WTC11 (cell line): ENCODE measurements at regions of chr5 and their contacts with region 1.

Region 1: DNA sequence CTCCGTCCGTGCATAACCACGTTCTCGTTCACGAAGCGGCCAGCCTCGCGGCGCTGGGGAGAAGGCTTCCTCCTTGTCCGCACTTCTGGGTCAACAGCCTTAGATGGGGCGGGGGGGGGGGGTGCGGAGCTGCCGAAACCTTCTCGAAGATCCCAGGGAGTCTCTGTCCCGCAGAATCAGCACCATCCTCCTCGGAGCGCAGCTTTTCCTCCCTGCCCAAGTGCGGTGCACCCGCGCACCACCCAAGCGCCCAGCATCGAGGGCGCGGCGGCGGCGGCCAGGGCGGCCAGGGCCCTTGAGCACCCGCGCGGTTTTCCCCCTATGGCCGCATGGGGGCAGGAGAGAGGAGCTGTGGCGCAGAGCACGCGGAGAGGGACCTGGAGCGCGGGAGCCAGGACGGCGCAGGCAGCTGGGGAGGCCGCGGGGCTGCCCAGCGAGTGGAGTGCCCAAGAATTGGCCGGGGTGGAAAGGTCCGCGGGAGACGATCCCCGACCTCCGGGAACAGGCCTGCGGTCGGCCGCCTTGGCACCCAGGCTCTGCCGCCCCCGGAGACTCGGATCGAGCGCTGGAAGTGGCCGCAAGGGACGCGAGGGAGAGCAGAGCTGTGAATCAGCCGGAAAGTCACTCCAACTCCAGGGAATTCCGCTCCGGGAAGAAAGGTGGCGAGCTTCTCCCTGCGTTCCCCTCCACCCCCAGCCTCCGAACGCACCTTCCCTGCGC is 43.1 kb downstream of the TMEM174 start:
- DNase-seq: peak; percentile 84
- ATAC-seq: peak; percentile 90
- H3K4me3 Mint-ChIP-seq: peak overlapping the region; percentile 64
- H3K27ac Mint-ChIP-seq: no peak overlapping the region
- H3K4me1 Mint-ChIP-seq: peaks cover 23% of the 10 kb centered on the region
- H3K27me3 Mint-ChIP-seq: peaks cover 68% of the 10 kb centered on the region
- CTCF ChIP-seq: peak; percentile 71; the same call in 1 of the 2 replicates

Region 2: DNA sequence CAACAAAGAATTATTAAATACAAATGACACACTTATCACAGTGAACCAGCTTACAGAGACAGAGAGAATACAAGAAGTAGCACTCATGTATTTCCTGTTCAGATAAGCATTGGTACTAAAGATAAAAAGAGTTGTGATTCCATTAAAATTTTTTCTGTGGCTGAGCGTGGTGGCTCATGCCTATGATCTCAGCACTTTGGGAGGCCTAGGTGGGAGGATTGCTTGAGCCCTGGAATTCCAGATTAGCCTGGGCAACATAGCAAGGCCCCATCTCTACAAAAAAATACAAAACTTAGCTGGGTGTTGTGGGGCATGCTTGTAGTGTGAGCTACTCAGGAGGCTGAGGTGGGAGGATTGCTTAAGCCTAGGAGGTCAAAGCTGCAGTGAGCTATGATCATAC is 227.3 kb before region 1 on chr5:
- CTCF ChIA-PET with region 1: no interaction called
- POLR2A ChIA-PET with region 1: no interaction called
- DNase-seq: no peak
- ATAC-seq: no peak
- H3K4me3 Mint-ChIP-seq: no peak overlapping the region
- H3K27ac Mint-ChIP-seq: no peak overlapping the region
- H3K4me1 Mint-ChIP-seq: no peaks in the 10 kb centered on the region
- H3K27me3 Mint-ChIP-seq: no peaks in the 10 kb centered on the region
- CTCF ChIP-seq: no peak

Region 3: DNA sequence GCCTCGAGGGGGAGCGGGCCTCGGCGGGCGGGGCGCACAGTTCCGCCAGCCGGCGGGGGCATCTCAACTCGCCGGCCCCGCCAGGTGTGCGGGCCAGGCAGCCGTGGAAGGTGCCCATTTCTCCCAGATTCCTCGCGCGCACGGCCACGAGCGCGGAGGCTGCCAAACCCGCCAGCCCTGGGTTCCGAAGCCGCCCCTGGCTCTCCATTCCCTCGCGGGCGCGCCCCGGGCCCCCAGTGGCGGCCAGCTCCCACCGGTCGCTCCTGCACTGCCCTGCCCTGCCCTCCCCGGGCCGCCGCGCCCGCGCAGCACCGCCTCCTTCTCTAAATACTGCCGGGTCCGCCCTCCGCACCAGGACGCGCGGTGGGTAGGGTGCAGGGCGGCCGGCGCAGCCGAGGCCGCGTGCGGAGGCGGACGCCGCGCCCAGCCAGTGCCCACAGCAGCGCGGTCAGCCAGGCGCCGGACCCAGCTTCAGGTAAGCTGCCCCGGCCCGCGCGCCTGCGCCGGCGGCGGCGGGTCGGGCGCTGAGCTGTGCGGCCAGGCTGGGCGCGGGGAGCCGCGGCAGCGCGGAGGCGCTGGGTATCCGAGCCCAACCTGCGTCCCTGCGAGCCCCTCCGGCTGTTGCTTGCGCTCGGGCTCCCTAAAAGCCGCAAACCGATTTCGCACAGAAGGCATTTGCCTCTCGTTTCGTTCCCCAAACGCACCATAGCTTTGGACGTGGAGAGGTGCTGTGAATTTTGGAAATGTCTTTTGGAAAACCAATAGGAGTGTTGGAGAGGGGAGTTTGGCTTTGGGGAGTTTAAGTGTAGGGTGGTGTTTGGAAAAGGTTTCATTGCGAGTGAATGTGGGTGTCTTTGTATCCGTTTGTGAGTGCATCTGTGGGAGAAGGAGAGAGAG is 95.6 kb before region 1 on chr5 and contains the start of gene TMEM171:
- CTCF ChIA-PET with region 1: interaction called, 18 read pairs
- POLR2A ChIA-PET with region 1: no interaction called
- DNase-seq: peak; percentile 73
- ATAC-seq: peak; percentile 81
- H3K4me3 Mint-ChIP-seq: peak within 1 kb of the TSS; percentile 79
- H3K27ac Mint-ChIP-seq: no peak within 1 kb of the TSS
- H3K4me1 Mint-ChIP-seq: peaks cover 31% of the 10 kb centered on the region
- H3K27me3 Mint-ChIP-seq: peaks cover 68% of the 10 kb centered on the region
- CTCF ChIP-seq: no peak
- total RNA-seq, gene TMEM171: 0.96 to 1.8 TPM (median 1.7 TPM) in 3 replicates

Region 4: DNA sequence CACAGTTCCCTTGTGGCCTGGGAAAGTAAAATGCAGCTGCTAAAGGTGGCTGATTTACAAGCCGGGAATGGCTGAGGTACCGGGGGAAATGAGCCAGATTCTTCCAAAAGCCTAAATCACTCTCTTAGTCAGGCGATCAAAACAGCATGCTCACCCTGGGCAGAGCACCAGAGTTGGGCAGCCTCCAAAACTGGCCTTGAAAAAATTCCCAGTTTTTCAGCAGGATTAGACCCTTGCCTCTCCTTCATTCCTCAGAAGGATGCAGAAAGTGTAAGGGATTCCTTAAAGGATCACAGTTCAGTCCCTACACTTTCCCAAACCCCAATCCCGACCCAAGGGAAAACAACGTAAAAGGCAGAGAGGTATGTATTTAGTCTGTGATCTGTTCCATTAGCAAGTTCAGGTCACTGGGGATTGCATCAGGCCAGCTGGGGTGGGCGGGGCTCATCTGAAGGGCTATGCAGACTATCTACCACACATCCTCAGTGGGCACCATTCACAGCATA is 26.1 kb before region 1 on chr5:
- CTCF ChIA-PET with region 1: interaction called, 14 read pairs
- POLR2A ChIA-PET with region 1: interaction called, 5 read pairs
- DNase-seq: peak; percentile 50
- ATAC-seq: peak; percentile 61
- H3K4me3 Mint-ChIP-seq: no peak overlapping the region
- H3K27ac Mint-ChIP-seq: no peak overlapping the region
- H3K4me1 Mint-ChIP-seq: peaks cover 20% of the 10 kb centered on the region
- H3K27me3 Mint-ChIP-seq: no peaks in the 10 kb centered on the region
- CTCF ChIP-seq: no peak

Region 5: GRCh38 chr5:73266925-73267765 is 51.1 kb after region 1 on chr5:
- CTCF ChIA-PET with region 1: interaction called, 11 read pairs
- POLR2A ChIA-PET with region 1: no interaction called
- DNase-seq: no peak
- ATAC-seq: no peak
- H3K4me3 Mint-ChIP-seq: no peak overlapping the region
- H3K27ac Mint-ChIP-seq: no peak overlapping the region
- H3K4me1 Mint-ChIP-seq: peaks cover 18% of the 10 kb centered on the region
- H3K27me3 Mint-ChIP-seq: peaks cover 8% of the 10 kb centered on the region
- CTCF ChIP-seq: no peak

Region 6: DNA sequence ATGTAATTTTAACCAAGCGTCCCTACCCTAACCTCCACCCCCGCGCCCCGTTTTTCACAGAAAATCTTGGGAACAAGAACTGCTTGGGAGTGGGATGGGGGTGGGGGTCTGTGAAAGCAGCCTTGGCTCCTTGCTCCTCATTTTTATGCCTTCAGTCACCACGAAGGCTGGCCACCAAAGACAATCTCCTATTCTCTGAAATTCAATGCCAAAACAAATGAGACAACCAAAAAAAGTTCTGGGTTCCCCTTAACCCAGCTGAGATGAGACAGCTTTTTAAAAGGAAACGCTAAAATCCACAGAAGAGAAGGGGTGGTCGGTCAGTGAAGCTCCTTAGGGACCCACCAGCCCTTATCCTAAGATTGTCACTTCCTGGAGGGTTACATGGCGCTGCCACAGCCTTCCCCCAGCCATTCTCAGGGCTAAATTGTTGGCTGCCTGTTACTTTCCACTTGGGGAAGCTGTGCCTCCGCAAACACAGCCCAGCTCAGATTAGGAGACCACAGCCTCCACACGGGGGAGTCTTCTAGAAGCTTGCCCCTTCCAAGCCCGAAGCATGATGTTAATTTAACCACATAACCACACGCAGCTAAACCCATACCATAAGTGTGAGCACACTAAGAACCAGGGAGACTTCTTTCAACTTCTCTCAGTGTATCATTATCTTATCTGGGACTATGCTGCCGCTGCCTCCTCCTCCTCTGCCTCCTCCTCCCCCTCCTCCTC is 96.3 kb after region 1 on chr5:
- CTCF ChIA-PET with region 1: interaction called, 14 read pairs
- POLR2A ChIA-PET with region 1: no interaction called
- DNase-seq: peak; percentile 37
- ATAC-seq: peak; percentile 51
- H3K4me3 Mint-ChIP-seq: peak overlapping the region; percentile 66
- H3K27ac Mint-ChIP-seq: no peak overlapping the region
- H3K4me1 Mint-ChIP-seq: peaks cover 37% of the 10 kb centered on the region
- H3K27me3 Mint-ChIP-seq: peaks cover 77% of the 10 kb centered on the region
- CTCF ChIP-seq: no peak

Region 7: GRCh38 chr5:73338256-73339050 is 122.4 kb after region 1 on chr5:
- CTCF ChIA-PET with region 1: no interaction called
- POLR2A ChIA-PET with region 1: no interaction called
- DNase-seq: no peak
- ATAC-seq: peak; percentile 32; the same call in 1 of the 2 replicates
- H3K4me3 Mint-ChIP-seq: no peak overlapping the region
- H3K27ac Mint-ChIP-seq: no peak overlapping the region
- H3K4me1 Mint-ChIP-seq: peaks cover 13% of the 10 kb centered on the region
- H3K27me3 Mint-ChIP-seq: peaks cover 6% of the 10 kb centered on the region
- CTCF ChIP-seq: no peak

Region 8: GRCh38 chr5:73482383-73483136 is 266.5 kb after region 1 on chr5:
- CTCF ChIA-PET with region 1: no interaction called
- POLR2A ChIA-PET with region 1: no interaction called
- DNase-seq: no peak
- ATAC-seq: no peak
- H3K4me3 Mint-ChIP-seq: no peak overlapping the region
- H3K27ac Mint-ChIP-seq: no peak overlapping the region
- H3K4me1 Mint-ChIP-seq: peaks cover 49% of the 10 kb centered on the region
- H3K27me3 Mint-ChIP-seq: no peaks in the 10 kb centered on the region
- CTCF ChIP-seq: no peak

Region 9: GRCh38 chr5:73605227-73606020 is 389.4 kb after region 1 on chr5:
- CTCF ChIA-PET with region 1: no interaction called
- POLR2A ChIA-PET with region 1: no interaction called
- DNase-seq: no peak
- ATAC-seq: no peak
- H3K4me3 Mint-ChIP-seq: no peak overlapping the region
- H3K27ac Mint-ChIP-seq: no peak overlapping the region
- H3K4me1 Mint-ChIP-seq: no peaks in the 10 kb centered on the region
- H3K27me3 Mint-ChIP-seq: peaks cover under 1% of the 10 kb centered on the region; the same call in 1 of the 2 replicates
- CTCF ChIP-seq: no peak